HCT116 (cell line): ENCODE measurements at regions of chr13 and their contacts with region 1.

Region 1: DNA sequence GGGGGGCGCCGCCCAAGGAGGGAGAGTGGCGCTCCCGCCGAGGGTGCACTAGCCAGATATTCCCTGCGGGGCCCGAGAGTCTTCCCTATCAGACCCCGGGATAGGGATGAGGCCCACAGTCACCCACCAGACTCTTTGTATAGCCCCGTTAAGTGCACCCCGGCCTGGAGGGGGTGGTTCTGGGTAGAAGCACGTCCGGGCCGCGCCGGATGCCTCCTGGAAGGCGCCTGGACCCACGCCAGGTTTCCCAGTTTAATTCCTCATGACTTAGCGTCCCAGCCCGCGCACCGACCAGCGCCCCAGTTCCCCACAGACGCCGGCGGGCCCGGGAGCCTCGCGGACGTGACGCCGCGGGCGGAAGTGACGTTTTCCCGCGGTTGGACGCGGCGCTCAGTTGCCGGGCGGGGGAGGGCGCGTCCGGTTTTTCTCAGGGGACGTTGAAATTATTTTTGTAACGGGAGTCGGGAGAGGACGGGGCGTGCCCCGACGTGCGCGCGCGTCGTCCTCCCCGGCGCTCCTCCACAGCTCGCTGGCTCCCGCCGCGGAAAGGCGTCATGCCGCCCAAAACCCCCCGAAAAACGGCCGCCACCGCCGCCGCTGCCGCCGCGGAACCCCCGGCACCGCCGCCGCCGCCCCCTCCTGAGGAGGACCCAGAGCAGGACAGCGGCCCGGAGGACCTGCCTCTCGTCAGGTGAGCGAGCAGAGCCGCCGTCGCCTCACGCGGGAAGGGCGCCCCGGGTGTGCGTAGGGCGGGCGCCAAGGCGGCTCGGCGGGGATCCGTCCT is at the start of gene RB1:
- DNase-seq: peak; percentile 70
- ATAC-seq: peak; percentile 91
- H3K4me3 ChIP-seq: peak within 1 kb of the TSS; percentile 73 to 96
- H3K27ac ChIP-seq: peak within 1 kb of the TSS; percentile 91
- H3K4me1 ChIP-seq: peaks cover 11 to 13% of the 10 kb centered on the region in 2 experiments; a peak in 3 of 4 replicates
- H3K27me3 ChIP-seq: no peaks in the 10 kb centered on the region
- CTCF ChIP-seq: no peak
- POLR2A ChIP-seq: peak; percentile 54
- RAD21 ChIP-seq: 0 out of 2 replicates have a peak, but pooled peaks have one; percentile 3
- total RNA-seq, gene RB1: 36.7 TPM

Region 2: GRCh38 chr13:48094781-48095502 is 208.6 kb before region 1 on chr13 and contains the start of gene MED4:
- CTCF ChIA-PET with region 1: no interaction called
- POLR2A ChIA-PET with region 1: no interaction called
- RAD21 ChIA-PET with region 1: no interaction called
- intact Hi-C with region 1: loop called (anchors 10 kb)
- DNase-seq: peak; percentile 84
- ATAC-seq: peak; percentile 95
- H3K4me3 ChIP-seq: peak within 1 kb of the TSS; percentile 89 to 98
- H3K27ac ChIP-seq: peak within 1 kb of the TSS; percentile 36
- H3K4me1 ChIP-seq: peaks cover 7 to 10% of the 10 kb centered on the region in 2 experiments; a peak in 3 of 4 replicates
- H3K27me3 ChIP-seq: no peaks in the 10 kb centered on the region
- CTCF ChIP-seq: peak; percentile 92 to 99 (median 99)
- POLR2A ChIP-seq: no peak
- RAD21 ChIP-seq: peak; percentile 36
- total RNA-seq, gene MED4: 46.9 TPM

Region 3: GRCh38 chr13:48126944-48127830 is 176.4 kb before region 1 on chr13:
- CTCF ChIA-PET with region 1: no interaction called
- POLR2A ChIA-PET with region 1: no interaction called
- RAD21 ChIA-PET with region 1: no interaction called
- intact Hi-C with region 1: loop called (anchors 5 kb)
- DNase-seq: peak; percentile 59
- ATAC-seq: peak; percentile 87
- H3K4me3 ChIP-seq: no peak overlapping the region
- H3K27ac ChIP-seq: no peak overlapping the region
- H3K4me1 ChIP-seq: 0 out of 4 replicates have a peak, but pooled peaks cover 0 to 5% of the 10 kb centered on the region in 2 experiments
- H3K27me3 ChIP-seq: no peaks in the 10 kb centered on the region
- CTCF ChIP-seq: peak; percentile 70 to 82 (median 72)
- POLR2A ChIP-seq: no peak
- RAD21 ChIP-seq: peak; percentile 78

Region 4: GRCh38 chr13:48477191-48477855 is 173.8 kb after region 1 on chr13:
- CTCF ChIA-PET with region 1: no interaction called
- POLR2A ChIA-PET with region 1: no interaction called
- RAD21 ChIA-PET with region 1: no interaction called
- intact Hi-C with region 1: no loop called
- DNase-seq: no peak
- ATAC-seq: no peak
- H3K4me3 ChIP-seq: no peak overlapping the region
- H3K27ac ChIP-seq: no peak overlapping the region
- H3K4me1 ChIP-seq: no peaks in the 10 kb centered on the region
- H3K27me3 ChIP-seq: no peaks in the 10 kb centered on the region
- CTCF ChIP-seq: no peak
- POLR2A ChIP-seq: no peak
- RAD21 ChIP-seq: no peak

Region 5: GRCh38 chr13:48542581-48543341 is 239.2 kb after region 1 on chr13:
- CTCF ChIA-PET with region 1: no interaction called
- POLR2A ChIA-PET with region 1: no interaction called
- RAD21 ChIA-PET with region 1: no interaction called
- intact Hi-C with region 1: no loop called
- DNase-seq: no peak
- ATAC-seq: peak; percentile 81
- H3K4me3 ChIP-seq: no peak overlapping the region
- H3K27ac ChIP-seq: no peak overlapping the region
- H3K4me1 ChIP-seq: peaks cover 0 to 7% of the 10 kb centered on the region in 2 experiments; a peak in 1 of 4 replicates
- H3K27me3 ChIP-seq: no peaks in the 10 kb centered on the region
- CTCF ChIP-seq: no peak
- POLR2A ChIP-seq: no peak
- RAD21 ChIP-seq: no peak